KBM-7 (cell line): ENCODE measurements at regions of chr22 and their contacts with region 1.

Region 1: DNA sequence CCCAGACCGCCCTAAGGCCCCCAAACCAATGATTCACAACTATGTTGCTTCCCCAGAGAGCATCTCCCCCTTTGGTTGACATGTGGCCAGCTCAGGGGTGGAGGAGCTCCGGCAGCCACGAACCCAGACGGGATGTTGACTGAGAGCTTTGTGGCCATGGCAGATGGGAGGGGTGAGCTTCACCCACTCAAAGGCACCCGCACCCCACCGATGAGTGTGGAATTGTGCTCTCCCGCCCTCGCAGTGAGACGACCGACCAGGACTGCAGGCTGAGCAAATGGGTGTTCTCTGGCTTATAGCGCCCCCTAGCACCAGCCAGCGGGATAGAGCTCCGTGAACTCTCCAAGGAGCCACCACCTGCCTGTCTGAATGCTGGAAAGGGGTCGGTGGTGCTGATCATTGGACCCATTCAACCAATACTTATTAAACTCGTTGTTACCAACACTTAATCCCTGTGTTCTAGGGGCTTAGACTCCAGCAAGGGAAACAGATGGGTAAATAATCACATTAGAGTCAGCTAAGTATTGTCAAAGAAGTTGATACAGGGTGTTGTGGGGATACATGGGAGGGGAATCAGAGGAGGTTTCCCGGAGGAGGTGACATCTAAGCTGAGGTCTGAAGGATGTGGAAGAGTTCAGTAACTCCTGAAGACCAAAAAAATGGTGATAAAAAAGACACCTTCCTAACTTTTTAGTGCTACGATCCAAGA is 4.5 kb upstream of the TIMP3 start:
- DNase-seq: peak; percentile 77

Region 2: GRCh38 chr22:32528984-32529982 is 267.7 kb before region 1 on chr22:
- in situ Hi-C with region 1: loop called (anchors 10 kb)
- DNase-seq: peak; percentile 76

Region 3: DNA sequence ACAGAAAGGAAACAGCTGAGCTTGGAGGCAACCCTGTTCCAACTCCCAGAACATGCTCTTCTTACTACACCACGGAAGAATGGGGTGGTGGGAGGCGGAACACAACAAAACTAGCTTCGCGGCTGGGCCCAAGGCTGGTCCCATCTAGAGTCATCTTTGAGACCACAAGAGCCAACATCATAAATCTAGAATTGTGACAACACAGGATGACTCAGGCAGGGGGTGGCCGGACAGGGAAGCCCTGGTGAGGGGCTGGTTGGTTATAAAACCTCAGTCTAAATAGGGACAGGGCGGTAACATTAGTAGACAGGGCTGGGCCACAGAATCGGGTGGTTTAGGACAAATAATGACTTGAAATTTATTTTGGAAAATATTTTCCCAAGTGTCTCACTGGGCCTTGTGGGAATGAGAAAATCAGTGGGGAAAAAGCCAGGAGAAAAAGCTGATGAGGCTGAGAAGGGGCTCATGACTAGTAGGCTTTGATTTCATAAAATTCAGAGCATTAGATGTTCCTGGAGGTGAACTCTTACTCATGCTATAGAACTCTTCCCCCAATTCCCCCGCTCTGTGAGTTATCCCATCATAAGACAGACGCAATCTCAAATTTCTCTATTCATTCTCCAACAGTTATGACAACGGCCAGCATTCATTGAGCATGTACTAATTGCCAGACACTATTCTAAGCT is 147.4 kb before region 1 on chr22:
- in situ Hi-C with region 1: loop called (anchors 10 kb)
- DNase-seq: peak; percentile 93

Region 4: GRCh38 chr22:33028234-33028633 is 231.2 kb after region 1 on chr22:
- in situ Hi-C with region 1: no loop called
- DNase-seq: no peak